H1 (cell line): ENCODE measurements at regions of chr7 and their contacts with region 1.

Region 1: GRCh38 chr7:22586786-22587140 is 86.8 kb upstream of the STEAP1B start:
- DNase-seq: no peak
- H3K4me3 ChIP-seq: no peak overlapping the region
- H3K27ac ChIP-seq: no peak overlapping the region
- H3K4me1 ChIP-seq: peaks cover 4 to 22% (median 13%) of the 10 kb centered on the region in 4 experiments; a peak in 6 of 7 replicates
- H3K27me3 ChIP-seq: no peaks in the 10 kb centered on the region
- CTCF ChIP-seq: peak; percentile 10 to 64 (median 52)
- EP300 ChIP-seq: 0 out of 3 replicates have a peak, but pooled peaks of 1 of the 2 experiments have one; percentile 31
- POLR2A ChIP-seq: no peak
- RAD21 ChIP-seq: peak; percentile 43 to 55; a peak in 3 of 4 replicates

Region 2: GRCh38 chr7:22166928-22167327 is 419.8 kb before region 1 on chr7:
- CTCF ChIA-PET with region 1: no interaction called
- POLR2A ChIA-PET with region 1: no interaction called
- DNase-seq: no peak
- H3K4me3 ChIP-seq: no peak overlapping the region
- H3K27ac ChIP-seq: no peak overlapping the region
- H3K4me1 ChIP-seq: no peaks in the 10 kb centered on the region
- H3K27me3 ChIP-seq: no peaks in the 10 kb centered on the region
- CTCF ChIP-seq: no peak
- EP300 ChIP-seq: no peak
- POLR2A ChIP-seq: no peak
- RAD21 ChIP-seq: no peak

Region 3: DNA sequence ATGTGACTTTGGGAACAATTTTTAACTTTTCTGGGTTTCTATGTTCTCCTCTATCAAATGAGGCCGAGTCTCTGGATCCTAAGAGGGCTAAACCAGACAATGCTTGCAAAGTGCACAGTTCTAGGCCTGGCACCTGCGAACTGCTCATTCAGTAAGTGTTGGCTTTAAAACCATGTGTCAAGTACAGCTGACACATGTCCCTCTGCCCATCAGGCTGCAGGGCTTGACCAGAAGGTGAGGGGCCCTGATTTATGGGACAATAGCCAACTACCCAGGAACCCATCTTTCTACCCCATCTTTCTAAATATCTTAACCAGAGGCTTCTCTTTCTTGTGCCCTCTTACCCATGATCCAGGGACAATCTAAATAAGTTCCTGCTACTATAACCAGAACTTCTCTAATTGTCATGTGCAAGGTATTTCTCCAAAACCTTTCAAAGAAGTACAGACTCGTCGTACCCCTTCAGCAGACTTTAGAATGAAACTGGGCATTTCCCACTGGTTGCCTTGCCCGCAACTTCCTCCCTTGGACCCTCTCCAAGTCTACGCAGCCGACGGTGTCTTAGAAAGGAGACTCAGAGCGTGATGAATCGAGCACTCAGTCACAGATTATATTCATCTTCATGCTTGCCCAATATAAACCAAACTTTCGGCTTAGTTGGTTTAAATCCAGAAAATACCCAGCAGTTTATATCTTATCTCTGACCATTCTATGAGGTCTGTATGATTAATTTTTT is 17.0 kb before region 1 on chr7:
- CTCF ChIA-PET with region 1: interaction called, 100 read pairs
- POLR2A ChIA-PET with region 1: interaction called, 7 read pairs
- DNase-seq: no peak
- H3K4me3 ChIP-seq: no peak overlapping the region
- H3K27ac ChIP-seq: no peak overlapping the region
- H3K4me1 ChIP-seq: peaks cover 0 to 4% (median 2%) of the 10 kb centered on the region in 4 experiments; a peak in 3 of 7 replicates
- H3K27me3 ChIP-seq: no peaks in the 10 kb centered on the region
- CTCF ChIP-seq: no peak
- EP300 ChIP-seq: no peak
- POLR2A ChIP-seq: no peak
- RAD21 ChIP-seq: no peak

Region 4: DNA sequence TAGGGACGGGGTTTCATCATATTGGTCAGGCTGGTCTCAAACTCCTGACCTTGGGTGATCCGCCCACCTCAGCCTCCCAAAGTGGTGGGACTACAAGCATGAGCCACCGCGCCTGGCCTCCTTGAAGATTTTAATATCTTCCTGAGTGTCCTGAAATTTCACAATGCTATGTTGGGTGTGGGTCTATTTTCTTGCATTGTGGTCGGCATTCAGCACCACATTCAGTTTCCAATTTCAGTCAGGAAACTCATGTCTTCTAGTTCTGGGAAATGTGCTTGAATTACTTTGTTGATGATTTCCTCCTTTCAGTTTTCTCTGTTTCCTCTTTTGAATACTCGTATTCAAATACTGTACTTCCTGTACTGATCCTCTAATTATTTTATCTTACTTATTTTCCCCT is 90.9 kb after region 1 on chr7:
- CTCF ChIA-PET with region 1: interaction called, 10 read pairs
- POLR2A ChIA-PET with region 1: no interaction called
- DNase-seq: no peak
- H3K4me3 ChIP-seq: no peak overlapping the region
- H3K27ac ChIP-seq: no peak overlapping the region
- H3K4me1 ChIP-seq: no peaks in the 10 kb centered on the region; a peak in 1 of 7 replicates
- H3K27me3 ChIP-seq: no peaks in the 10 kb centered on the region
- CTCF ChIP-seq: no peak
- EP300 ChIP-seq: no peak
- POLR2A ChIP-seq: no peak
- RAD21 ChIP-seq: no peak

Region 5: DNA sequence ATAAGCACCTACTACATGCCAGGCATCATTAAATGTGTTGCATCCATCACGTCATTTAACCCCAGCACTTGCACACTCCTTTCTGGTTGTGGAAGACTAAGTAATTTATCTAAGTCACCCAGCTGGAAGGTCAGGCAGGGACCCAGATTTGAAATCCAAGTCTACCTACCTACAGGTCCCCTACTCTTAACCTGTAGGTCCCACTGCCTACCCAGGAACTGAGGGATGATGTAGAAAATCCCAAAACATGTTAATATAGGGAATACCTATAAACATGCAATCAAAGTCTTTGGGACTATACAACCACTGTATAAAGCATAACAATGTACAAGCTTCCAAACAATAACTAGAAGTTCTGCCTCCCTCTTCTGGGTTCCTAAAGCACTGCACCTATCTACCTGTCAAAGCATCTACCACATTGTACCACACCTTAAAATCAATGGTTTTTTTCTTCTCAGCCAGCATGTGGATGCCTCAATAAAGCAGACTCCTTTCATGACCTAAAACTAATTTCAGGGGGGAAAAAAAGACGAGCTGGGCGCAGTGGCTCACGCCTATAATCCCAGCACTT is 145.9 kb after region 1 on chr7:
- CTCF ChIA-PET with region 1: interaction called, 145 read pairs
- POLR2A ChIA-PET with region 1: no interaction called
- DNase-seq: no peak
- H3K4me3 ChIP-seq: no peak overlapping the region
- H3K27ac ChIP-seq: no peak overlapping the region
- H3K4me1 ChIP-seq: peaks cover 0 to 2% (median 0%) of the 10 kb centered on the region in 4 experiments; a peak in 1 of 7 replicates
- H3K27me3 ChIP-seq: no peaks in the 10 kb centered on the region
- CTCF ChIP-seq: peak in 2 of 3 experiments; percentile 33 to 53; a peak in 2 of 4 replicates
- EP300 ChIP-seq: no peak
- POLR2A ChIP-seq: no peak
- RAD21 ChIP-seq: peak; percentile 58 to 61